Right lobe of liver (tissue), 6 donors: ENCODE measurements at regions of chr14 and their contacts with region 1.

Region 1: GRCh38 chr14:104650057-104650981 is 39.1 kb upstream of the INF2 start:
- DNase-seq: peak; percentile 63 to 74 (median 68)
- ATAC-seq: peak; percentile 73 to 79 (median 76)
- H3K4me3 ChIP-seq: peak overlapping the region in 2 of 3 donors; percentile 38 to 46
- H3K27ac ChIP-seq: no peak overlapping the region
- H3K4me1 ChIP-seq: peaks cover 0 to 23% (median 3%) of the 10 kb centered on the region in 4 donors
- H3K27me3 ChIP-seq: no peaks in the 10 kb centered on the region
- CTCF ChIP-seq: peak; percentile 86 to 92 (median 90)
- POLR2A ChIP-seq: no peak

Region 2: DNA sequence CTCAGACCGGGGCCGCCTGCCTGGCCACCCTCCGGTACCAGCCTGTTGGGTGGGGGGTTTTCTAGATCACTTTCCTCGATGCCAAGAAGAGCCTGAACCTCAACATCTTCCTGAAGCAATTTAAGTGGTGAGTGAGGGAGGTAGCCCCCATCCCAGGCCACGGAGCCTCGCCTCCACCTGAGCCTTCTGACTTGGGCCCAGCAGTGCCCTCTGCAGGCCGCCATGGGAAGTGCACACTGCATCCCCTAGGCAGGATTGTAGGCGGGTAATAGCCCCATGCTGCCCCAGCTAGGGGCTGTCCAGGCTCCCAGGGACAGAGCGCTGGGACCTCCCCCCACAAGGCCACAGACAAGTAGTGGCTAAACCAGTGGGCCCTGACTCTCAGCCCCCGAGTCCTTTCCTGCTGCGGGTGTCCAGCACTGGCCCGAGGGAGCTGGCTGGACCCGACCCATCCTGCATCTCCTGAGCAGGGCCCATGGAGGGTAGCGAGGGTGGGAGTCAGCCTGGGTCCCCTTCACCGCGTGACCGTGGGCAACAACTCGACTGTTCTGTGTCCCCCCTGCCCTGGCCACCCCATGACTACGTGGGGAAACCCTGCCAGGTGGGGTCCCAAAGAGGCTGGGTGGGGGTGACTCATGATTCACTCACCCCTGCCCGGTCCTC is 58.4 kb after region 1 on chr14:
- intact Hi-C with region 1: loop called (anchors 5 kb)
- DNase-seq: peak in 1 of 3 donors; percentile 62
- ATAC-seq: peak; percentile 77 to 86 (median 80)
- H3K4me3 ChIP-seq: no peak overlapping the region
- H3K27ac ChIP-seq: no peak overlapping the region
- H3K4me1 ChIP-seq: no peaks in the 10 kb centered on the region
- H3K27me3 ChIP-seq: no peaks in the 10 kb centered on the region
- CTCF ChIP-seq: peak; percentile 91 to 99 (median 96)
- POLR2A ChIP-seq: no peak